Activated CD8-positive, alpha-beta T cell treated with anti-CD3 and anti-CD28 coated beads, Interleukin-2, amount 10 ng/mL, durations not matched to agents 7 days and 5 days (primary cell): ENCODE measurements at regions of chr16 and their contacts with region 1.

Region 1: DNA sequence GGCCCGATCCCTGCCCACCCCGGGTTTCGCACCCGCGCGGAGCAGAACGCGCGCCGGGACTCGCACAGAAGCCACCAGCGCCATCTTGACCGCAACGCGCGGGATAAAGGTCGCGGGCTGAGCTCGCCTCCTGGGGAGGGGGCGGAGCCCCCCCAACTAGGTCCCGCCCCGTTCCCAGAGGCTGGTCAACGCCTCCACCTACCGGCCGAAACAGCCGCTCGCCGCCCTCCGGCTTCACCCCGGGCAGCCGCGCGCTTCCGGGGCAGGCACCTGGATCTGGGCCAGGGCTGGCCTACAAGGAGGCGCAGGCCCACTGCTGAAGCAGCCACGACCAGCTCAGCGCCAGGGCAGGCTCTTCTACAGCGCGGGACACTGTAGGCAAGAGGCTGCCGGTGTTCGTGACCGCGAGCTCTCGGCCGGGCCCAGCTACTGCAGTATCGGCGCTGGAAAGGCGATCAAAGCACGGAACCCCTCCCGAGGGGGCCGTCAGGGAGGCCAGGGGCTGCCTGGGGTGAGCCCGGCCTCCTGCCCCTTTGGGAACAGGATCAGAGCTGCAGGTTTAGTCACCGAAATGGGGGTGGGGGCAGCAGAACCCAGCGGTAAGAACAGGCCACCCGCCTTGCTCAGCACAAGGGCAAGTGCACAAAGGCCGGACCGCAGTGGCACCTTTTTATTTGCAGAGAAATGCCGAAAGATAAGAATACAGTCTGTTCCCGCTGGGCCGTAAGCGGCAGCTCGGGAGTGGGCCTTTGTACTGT is at the start of gene ECI1:
- DNase-seq: peak; percentile 86
- ATAC-seq: peak; percentile 87
- H3K4me3 Mint-ChIP-seq: peak within 1 kb of the TSS; percentile 87
- H3K27ac Mint-ChIP-seq: peak within 1 kb of the TSS; percentile 91
- H3K4me1 Mint-ChIP-seq: peaks cover 5% of the 10 kb centered on the region
- H3K27me3 Mint-ChIP-seq: no peaks in the 10 kb centered on the region
- total RNA-seq, gene ECI1: 36.0 to 41.1 TPM

Region 2: DNA sequence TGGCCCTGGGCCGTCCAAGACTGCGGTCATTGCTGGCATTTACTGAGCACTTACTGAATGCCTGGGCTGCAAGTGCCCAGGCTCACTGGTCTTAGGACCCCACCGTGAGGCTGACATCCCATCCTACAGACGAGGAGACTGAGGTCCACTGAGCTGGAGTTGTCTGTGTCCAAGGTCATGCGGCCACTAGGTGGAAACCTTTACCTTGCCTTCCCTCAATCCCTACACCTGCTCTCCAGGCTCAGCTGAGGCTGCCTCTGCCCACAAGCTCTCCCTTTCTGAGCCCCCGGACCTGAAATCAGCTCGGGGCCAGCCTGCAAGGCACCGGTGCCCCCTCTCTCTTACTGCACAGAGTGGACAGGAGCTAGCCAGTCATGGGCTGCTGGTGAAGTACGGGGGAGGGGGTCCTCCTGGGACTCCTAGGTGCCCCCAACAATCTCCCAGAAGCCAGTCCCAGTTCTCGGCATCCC is 56.8 kb before region 1 on chr16:
- CTCF ChIA-PET with region 1: interaction called, 18 read pairs
- POLR2A ChIA-PET with region 1: interaction called, 5 read pairs
- DNase-seq: peak; percentile 67
- ATAC-seq: peak; percentile 70
- H3K4me3 Mint-ChIP-seq: no peak overlapping the region
- H3K27ac Mint-ChIP-seq: no peak overlapping the region
- H3K4me1 Mint-ChIP-seq: peaks cover 3% of the 10 kb centered on the region
- H3K27me3 Mint-ChIP-seq: peaks cover 40% of the 10 kb centered on the region

Region 3: DNA sequence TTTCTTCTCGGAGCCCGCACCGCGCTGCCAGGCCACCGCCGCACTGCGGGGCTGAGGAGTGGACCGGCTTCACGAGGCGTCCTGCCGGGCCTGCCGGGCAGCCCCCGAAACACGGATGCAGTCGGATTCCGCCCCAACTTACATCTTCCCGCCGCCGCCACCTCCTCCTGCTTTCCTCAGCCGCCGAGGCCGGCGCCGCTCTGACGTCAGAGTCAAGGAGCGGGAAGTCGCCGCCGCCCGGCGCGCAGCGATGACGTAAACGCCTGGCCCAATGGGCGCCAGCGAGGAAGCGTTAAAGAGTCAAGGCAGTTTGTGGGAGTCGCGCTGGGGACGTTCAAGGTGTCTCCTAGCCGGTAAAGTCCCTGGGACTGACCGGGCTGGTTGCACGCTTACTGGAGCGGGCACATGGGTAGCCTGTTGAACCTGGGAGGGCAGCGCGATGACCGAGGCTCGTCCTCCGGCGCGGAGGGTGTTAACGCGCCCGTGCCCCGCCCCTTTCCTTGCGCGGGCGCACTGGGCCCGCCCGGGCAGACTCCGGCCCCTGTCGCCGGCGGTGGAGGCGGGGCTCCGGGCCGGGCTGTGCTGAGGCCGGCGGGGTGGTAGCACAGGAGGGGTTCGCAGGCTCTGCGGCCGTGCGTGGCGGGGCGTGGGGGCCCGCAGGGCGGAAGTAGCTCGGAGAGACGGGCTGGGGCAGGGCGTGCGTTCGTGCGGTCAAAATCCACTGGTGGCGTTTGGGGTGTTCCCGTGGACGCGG is 16.4 kb after region 1 on chr16 and contains the start of gene RNPS1:
- CTCF ChIA-PET with region 1: interaction called, 13 read pairs
- POLR2A ChIA-PET with region 1: interaction called, 15 read pairs
- DNase-seq: peak; percentile 96
- ATAC-seq: peak; percentile 90
- H3K4me3 Mint-ChIP-seq: peak within 1 kb of the TSS; percentile 93
- H3K27ac Mint-ChIP-seq: peak within 1 kb of the TSS; percentile 98
- H3K4me1 Mint-ChIP-seq: peaks cover 44% of the 10 kb centered on the region
- H3K27me3 Mint-ChIP-seq: no peaks in the 10 kb centered on the region
- total RNA-seq, gene RNPS1: 260 to 268 TPM

Region 4: DNA sequence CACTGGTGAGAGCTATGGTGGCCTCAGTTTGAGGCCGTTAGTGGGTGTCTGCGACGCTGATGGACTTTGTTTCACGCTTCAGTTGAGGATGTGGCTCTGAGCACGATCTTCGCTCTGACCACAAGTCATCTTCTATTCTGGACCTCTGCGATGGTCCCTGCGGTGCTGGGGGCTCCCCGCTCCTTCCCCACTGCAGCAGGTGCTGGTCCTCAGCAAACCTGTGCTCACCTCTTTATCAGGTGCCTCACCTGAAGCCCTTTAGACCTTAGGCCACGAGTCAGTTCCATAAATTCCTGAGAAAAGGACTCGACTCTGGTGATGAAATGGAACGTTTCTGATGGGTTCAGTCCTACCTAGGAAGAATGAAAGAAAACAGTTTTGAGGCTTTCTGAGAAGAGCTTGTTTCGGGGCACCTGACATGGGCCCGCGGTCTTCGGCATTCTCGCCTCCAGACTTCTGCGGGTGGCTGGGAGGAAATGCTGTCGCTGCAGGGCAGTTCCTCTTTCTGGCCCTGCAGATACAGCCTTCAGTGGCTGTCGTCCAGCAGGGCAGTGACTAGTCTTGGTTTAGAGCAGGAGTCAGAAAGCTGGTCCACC is 435.3 kb after region 1 on chr16:
- CTCF ChIA-PET with region 1: no interaction called
- POLR2A ChIA-PET with region 1: no interaction called
- DNase-seq: peak; percentile 51
- ATAC-seq: no peak
- H3K4me3 Mint-ChIP-seq: peak overlapping the region; percentile 66
- H3K27ac Mint-ChIP-seq: peak overlapping the region; percentile 87
- H3K4me1 Mint-ChIP-seq: peaks cover 39% of the 10 kb centered on the region
- H3K27me3 Mint-ChIP-seq: no peaks in the 10 kb centered on the region